PC-9 (cell line): ENCODE measurements at regions of chr2 and their contacts with region 1.

Region 1: GRCh38 chr2:226411727-226412360 is 387.8 kb downstream of the IRS1 start:
- DNase-seq: peak; percentile 57 to 95
- H3K4me3 ChIP-seq: no peak overlapping the region
- H3K27ac ChIP-seq: peak overlapping the region; percentile 78
- H3K4me1 ChIP-seq: peaks cover 14% of the 10 kb centered on the region
- H3K27me3 ChIP-seq: no peaks in the 10 kb centered on the region
- CTCF ChIP-seq: no peak

Region 2: GRCh38 chr2:226030788-226031646 is 380.8 kb before region 1 on chr2:
- CTCF ChIA-PET with region 1: no interaction called
- POLR2A ChIA-PET with region 1: no interaction called
- intact Hi-C with region 1: no loop called
- DNase-seq: peak; percentile 49 to 65
- H3K4me3 ChIP-seq: peak overlapping the region; percentile 63
- H3K27ac ChIP-seq: peak overlapping the region; percentile 52
- H3K4me1 ChIP-seq: peaks cover 14% of the 10 kb centered on the region
- H3K27me3 ChIP-seq: no peaks in the 10 kb centered on the region
- CTCF ChIP-seq: no peak

Region 3: GRCh38 chr2:226618875-226619605 is 207.2 kb after region 1 on chr2:
- CTCF ChIA-PET with region 1: no interaction called
- POLR2A ChIA-PET with region 1: no interaction called
- intact Hi-C with region 1: no loop called
- DNase-seq: no peak
- H3K4me3 ChIP-seq: no peak overlapping the region
- H3K27ac ChIP-seq: no peak overlapping the region
- H3K4me1 ChIP-seq: peaks cover 8% of the 10 kb centered on the region; the same call in 1 of the 2 replicates
- H3K27me3 ChIP-seq: no peaks in the 10 kb centered on the region
- CTCF ChIP-seq: no peak

Region 4: GRCh38 chr2:226673314-226673723 is 261.5 kb after region 1 on chr2:
- CTCF ChIA-PET with region 1: no interaction called
- POLR2A ChIA-PET with region 1: interaction called, 4 read pairs
- intact Hi-C with region 1: loop called (anchors 5 kb)
- DNase-seq: peak; percentile 92 to 97
- H3K4me3 ChIP-seq: no peak overlapping the region
- H3K27ac ChIP-seq: peak overlapping the region; percentile 66
- H3K4me1 ChIP-seq: peaks cover 34% of the 10 kb centered on the region
- H3K27me3 ChIP-seq: no peaks in the 10 kb centered on the region
- CTCF ChIP-seq: no peak